OCI-LY7 (cell line): ENCODE measurements at regions of chr12 and their contacts with region 1.

Region 1: DNA sequence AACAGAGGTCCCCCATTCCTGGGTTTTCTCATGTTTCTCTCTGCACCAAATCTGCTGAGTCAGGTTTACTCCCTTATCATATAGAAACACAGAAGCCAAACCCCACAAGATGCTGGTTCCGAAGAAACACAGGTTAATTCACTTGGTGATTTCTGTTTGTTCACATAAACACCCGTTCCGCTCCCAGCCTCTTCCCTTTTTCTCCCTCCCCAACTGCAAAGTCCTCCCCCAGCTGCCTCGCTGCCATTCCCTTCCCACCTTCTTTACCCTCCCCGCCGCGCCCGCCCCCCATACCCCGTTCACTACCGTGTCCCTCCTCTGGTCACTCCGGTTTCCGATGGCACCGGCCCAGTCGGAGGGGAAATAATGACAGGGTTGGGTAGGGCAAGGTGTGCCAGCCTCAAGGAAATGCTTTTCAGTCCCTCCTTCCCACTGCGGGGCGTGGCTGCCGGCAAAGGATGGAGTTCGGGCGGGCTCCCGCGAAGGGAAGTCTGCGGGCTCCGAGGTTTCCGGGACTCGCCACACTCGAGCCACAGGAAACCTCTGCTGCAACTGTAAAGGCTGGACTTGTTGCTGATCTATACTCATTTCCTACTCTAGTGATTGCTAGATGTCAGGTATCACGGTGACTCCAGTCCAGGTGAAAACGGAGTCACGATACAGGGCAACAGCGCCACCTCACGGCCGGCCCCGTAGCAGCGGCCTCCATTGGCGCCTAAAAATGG is at the start of gene STYK1:
- DNase-seq: peak; percentile 67
- H3K4me3 ChIP-seq: peak within 1 kb of the TSS; percentile 65
- H3K27ac ChIP-seq: no peak within 1 kb of the TSS
- H3K4me1 ChIP-seq: peaks cover 21% of the 10 kb centered on the region
- CTCF ChIP-seq: peak; percentile 92
- total RNA-seq, gene STYK1: not detected in 2 replicates

Region 2: GRCh38 chr12:10153271-10154144 is 520.3 kb before region 1 on chr12:
- CTCF ChIA-PET with region 1: no interaction called
- POLR2A ChIA-PET with region 1: no interaction called
- intact Hi-C with region 1: loop called (anchors 5 kb)
- DNase-seq: peak; percentile 78
- H3K4me3 ChIP-seq: peak overlapping the region; percentile 70
- H3K27ac ChIP-seq: no peak overlapping the region
- H3K4me1 ChIP-seq: peaks cover 15% of the 10 kb centered on the region
- CTCF ChIP-seq: peak; percentile 95

Region 3: DNA sequence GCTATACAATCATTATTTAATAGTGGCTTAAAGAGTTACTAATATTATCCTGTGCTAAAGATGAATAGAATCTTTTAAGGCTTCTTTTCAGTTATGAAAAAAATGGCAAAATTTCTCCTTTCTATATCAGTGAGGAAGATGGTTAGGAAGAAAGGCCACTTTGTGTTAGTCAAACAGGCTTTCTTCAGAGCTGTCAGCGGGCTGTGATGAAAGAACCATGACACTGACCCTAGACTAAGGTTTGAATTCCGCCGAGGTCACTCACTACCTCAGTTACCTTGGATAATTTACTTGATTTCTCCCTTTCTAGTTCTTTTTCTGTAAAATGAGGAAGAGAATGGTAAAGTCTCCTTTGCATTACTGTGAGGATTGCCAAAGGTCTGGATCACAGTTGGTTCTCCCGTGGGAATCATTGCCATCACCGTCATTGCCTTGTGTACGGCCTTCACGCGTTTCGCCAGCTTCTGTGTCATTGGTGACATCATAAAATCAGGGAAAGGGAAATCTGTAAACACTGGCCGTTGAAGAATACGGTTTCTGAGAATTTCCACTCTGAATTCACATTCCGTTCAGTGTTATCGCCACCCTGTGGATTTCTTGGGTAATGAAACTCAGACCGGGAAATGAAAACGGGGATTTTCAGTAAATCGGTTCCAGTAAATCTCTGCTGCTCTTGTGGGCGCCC is 76.0 kb after region 1 on chr12:
- CTCF ChIA-PET with region 1: no interaction called
- POLR2A ChIA-PET with region 1: no interaction called
- intact Hi-C with region 1: loop called (anchors 5 kb)
- DNase-seq: peak; percentile 87
- H3K4me3 ChIP-seq: no peak overlapping the region
- H3K27ac ChIP-seq: no peak overlapping the region
- H3K4me1 ChIP-seq: peaks cover 5% of the 10 kb centered on the region
- CTCF ChIP-seq: peak; percentile 100